ENCODE measurements at regions of chr2 and their contacts with region 1.

Region 1: GRCh38 chr2:230712443-230713330 is at the start of gene CAB39:
- DNase-seq: peak; percentile 72 to 84
- H3K4me3 ChIP-seq: peak within 1 kb of the TSS; percentile 89 to 99 (median 97)
- H3K27ac ChIP-seq: peak within 1 kb of the TSS; percentile 93 to 96
- H3K4me1 ChIP-seq: no peaks in the 10 kb centered on the region
- H3K27me3 ChIP-seq: no peaks in the 10 kb centered on the region
- CTCF ChIP-seq: peak in 1 of 3 donors; percentile 65
- POLR2A ChIP-seq: no peak
- total RNA-seq, gene CAB39: 79.0 to 85.9 (median 83.4) TPM

Region 2: DNA sequence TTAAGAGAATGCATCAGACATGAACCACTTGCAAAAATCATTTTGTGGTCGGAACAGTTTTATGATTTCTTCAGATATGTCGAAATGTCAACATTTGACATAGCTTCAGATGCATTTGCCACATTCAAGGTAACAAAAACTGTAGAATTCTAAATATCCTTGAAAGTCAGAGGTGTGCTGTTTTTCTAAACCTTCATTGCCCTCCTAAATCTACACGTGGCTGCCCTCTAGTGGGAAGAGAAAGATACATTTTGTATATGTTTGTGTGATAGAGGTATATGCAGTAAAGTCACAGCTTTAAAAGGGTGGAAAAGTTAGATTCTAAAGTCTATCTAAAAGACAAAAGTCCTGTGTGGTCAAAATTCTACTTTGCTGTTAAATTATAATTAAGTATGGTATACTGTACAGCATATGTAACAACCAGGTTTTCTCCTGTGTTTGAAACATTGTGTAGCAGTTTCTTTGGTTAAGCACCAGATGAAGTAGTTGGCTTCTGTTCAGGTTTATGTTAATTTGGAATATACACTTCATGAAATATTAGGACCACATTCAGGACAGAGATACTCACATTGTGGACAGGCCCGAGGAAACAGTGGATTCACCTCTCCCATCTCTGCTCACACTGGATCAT is 86.2 kb after region 1 on chr2:
- intact Hi-C with region 1: loop called (anchors 10 kb)
- DNase-seq: no peak
- H3K4me3 ChIP-seq: no peak overlapping the region
- H3K27ac ChIP-seq: no peak overlapping the region
- H3K4me1 ChIP-seq: peaks cover 0 to 4% of the 10 kb centered on the region in 2 donors
- H3K27me3 ChIP-seq: no peaks in the 10 kb centered on the region
- CTCF ChIP-seq: peak in 2 of 3 donors; percentile 43 to 58
- POLR2A ChIP-seq: no peak

Measured in breast epithelium (tissue), 4 donors.